Heart right ventricle (tissue), 16 donors: ENCODE measurements at regions of chr11 and their contacts with region 1.

Region 1: DNA sequence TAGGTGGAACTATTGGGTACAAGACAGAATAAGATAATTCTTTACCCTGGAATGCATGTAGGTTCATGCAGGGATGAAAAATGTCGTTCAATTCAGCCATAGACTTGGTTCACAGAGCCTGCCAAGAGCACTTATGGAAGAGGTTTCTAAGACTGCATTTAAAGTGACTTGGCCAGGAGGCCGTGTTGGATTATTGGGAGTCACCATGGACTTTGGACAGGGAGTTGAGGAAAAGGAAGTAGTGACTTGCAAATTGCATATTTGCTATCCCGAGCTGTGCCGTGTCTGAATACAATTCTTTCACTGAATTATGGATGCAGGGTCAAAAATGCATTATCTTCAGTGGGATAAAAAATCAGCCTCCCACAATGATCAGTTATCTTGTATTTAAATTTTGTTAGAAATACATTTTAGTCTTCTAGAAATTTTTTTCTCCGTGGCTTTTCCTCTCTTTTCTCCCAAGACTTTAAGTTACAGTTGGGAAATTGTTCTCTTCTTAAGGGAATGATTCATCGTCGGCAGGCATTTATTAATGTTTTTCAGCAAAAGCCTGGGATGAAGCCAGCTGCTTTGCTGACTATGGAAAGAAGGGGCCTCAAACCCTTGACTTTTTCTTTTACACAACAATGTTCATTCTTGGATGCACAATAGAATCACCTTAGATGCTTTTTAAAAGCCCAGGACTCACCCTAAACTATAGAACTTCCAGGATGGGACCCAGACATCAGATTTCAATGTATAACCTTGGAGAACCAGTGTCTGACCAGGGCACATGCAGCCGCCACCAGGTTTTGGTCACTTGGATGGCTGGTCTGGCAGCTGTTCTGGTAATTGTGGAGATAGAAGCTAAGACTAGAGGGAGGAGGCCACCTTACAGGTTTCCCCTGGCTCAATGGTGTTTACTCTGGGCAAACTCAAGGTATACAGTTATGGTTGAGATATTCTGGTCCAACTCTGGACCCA is 70.8 kb downstream of the FAT3 start:
- DNase-seq: no peak
- ATAC-seq: no peak
- H3K4me3 ChIP-seq: no peak overlapping the region
- H3K27ac ChIP-seq: no peak overlapping the region
- H3K4me1 ChIP-seq: no peaks in the 10 kb centered on the region
- H3K27me3 ChIP-seq: no peaks in the 10 kb centered on the region
- CTCF ChIP-seq: no peak

Region 2: GRCh38 chr11:92240916-92241315 is 54.5 kb before region 1 on chr11:
- intact Hi-C with region 1: no loop called
- DNase-seq: no peak
- ATAC-seq: no peak
- H3K4me3 ChIP-seq: no peak overlapping the region
- H3K27ac ChIP-seq: no peak overlapping the region
- H3K4me1 ChIP-seq: no peaks in the 10 kb centered on the region
- H3K27me3 ChIP-seq: peaks cover 0 to 13% (median 0%) of the 10 kb centered on the region in 7 donors
- CTCF ChIP-seq: no peak

Region 3: GRCh38 chr11:92253945-92254344 is 41.5 kb before region 1 on chr11:
- intact Hi-C with region 1: no loop called
- DNase-seq: no peak
- ATAC-seq: no peak
- H3K4me3 ChIP-seq: no peak overlapping the region
- H3K27ac ChIP-seq: no peak overlapping the region
- H3K4me1 ChIP-seq: no peaks in the 10 kb centered on the region
- H3K27me3 ChIP-seq: no peaks in the 10 kb centered on the region
- CTCF ChIP-seq: no peak

Region 4: GRCh38 chr11:92362989-92363388 is 67.5 kb after region 1 on chr11:
- intact Hi-C with region 1: loop called in 1 of 10 experiments (anchors 10 kb)
- DNase-seq: no peak
- ATAC-seq: no peak
- H3K4me3 ChIP-seq: no peak overlapping the region
- H3K27ac ChIP-seq: no peak overlapping the region
- H3K4me1 ChIP-seq: no peaks in the 10 kb centered on the region
- H3K27me3 ChIP-seq: peaks cover 0 to 5% (median 0%) of the 10 kb centered on the region in 7 donors
- CTCF ChIP-seq: no peak

Region 5: GRCh38 chr11:93089474-93090102 is 794.1 kb after region 1 on chr11:
- intact Hi-C with region 1: no loop called
- DNase-seq: no peak
- ATAC-seq: peak in 4 of 8 donors; percentile 43 to 63 (median 59)
- H3K4me3 ChIP-seq: no peak overlapping the region
- H3K27ac ChIP-seq: no peak overlapping the region
- H3K4me1 ChIP-seq: peaks cover 0 to 4% (median 0%) of the 10 kb centered on the region in 9 donors
- H3K27me3 ChIP-seq: peaks cover 0 to 4% (median 0%) of the 10 kb centered on the region in 7 donors
- CTCF ChIP-seq: peak in 6 of 9 donors; percentile 27 to 54 (median 46)